Activated CD8-positive, alpha-beta T cell treated with anti-CD3 and anti-CD28 coated beads for 36 hours (primary cell): ENCODE measurements at regions of chr12 and their contacts with region 1.

Region 1: GRCh38 chr12:21677622-21678277 is 20.1 kb upstream of the LDHB start:
- DNase-seq: peak; percentile 25
- ATAC-seq: peak; percentile 31
- H3K4me3 Mint-ChIP-seq: peak overlapping the region; percentile 21
- H3K27ac Mint-ChIP-seq: peak overlapping the region; percentile 84
- H3K4me1 Mint-ChIP-seq: peaks cover 44% of the 10 kb centered on the region
- H3K27me3 Mint-ChIP-seq: no peaks in the 10 kb centered on the region
- CTCF ChIP-seq: no peak

Region 2: GRCh38 chr12:21248679-21249078 is 429.1 kb before region 1 on chr12:
- CTCF ChIA-PET with region 1: interaction called, 4 read pairs
- POLR2A ChIA-PET with region 1: no interaction called
- intact Hi-C with region 1: loop called (anchors 5 kb)
- DNase-seq: no peak
- ATAC-seq: no peak
- H3K4me3 Mint-ChIP-seq: no peak overlapping the region
- H3K27ac Mint-ChIP-seq: no peak overlapping the region
- H3K4me1 Mint-ChIP-seq: no peaks in the 10 kb centered on the region
- H3K27me3 Mint-ChIP-seq: no peaks in the 10 kb centered on the region
- CTCF ChIP-seq: peak; percentile 35

Region 3: GRCh38 chr12:21607701-21608100 is 70.0 kb before region 1 on chr12:
- CTCF ChIA-PET with region 1: interaction called, 12 read pairs
- POLR2A ChIA-PET with region 1: no interaction called
- intact Hi-C with region 1: loop called (anchors 2 kb)
- DNase-seq: no peak
- ATAC-seq: no peak
- H3K4me3 Mint-ChIP-seq: no peak overlapping the region
- H3K27ac Mint-ChIP-seq: no peak overlapping the region
- H3K4me1 Mint-ChIP-seq: no peaks in the 10 kb centered on the region
- H3K27me3 Mint-ChIP-seq: no peaks in the 10 kb centered on the region
- CTCF ChIP-seq: peak; percentile 29

Region 4: GRCh38 chr12:21650833-21651396 is 26.8 kb before region 1 on chr12:
- CTCF ChIA-PET with region 1: interaction called, 16 read pairs
- POLR2A ChIA-PET with region 1: interaction called, 31 read pairs
- intact Hi-C with region 1: loop called (anchors 2 kb)
- DNase-seq: no peak
- ATAC-seq: no peak
- H3K4me3 Mint-ChIP-seq: peak overlapping the region; percentile 14
- H3K27ac Mint-ChIP-seq: peak overlapping the region; percentile 27
- H3K4me1 Mint-ChIP-seq: peaks cover 85% of the 10 kb centered on the region
- H3K27me3 Mint-ChIP-seq: no peaks in the 10 kb centered on the region
- CTCF ChIP-seq: no peak

Region 5: GRCh38 chr12:21690704-21691368 is 13.1 kb after region 1 on chr12:
- CTCF ChIA-PET with region 1: interaction called, 20 read pairs
- POLR2A ChIA-PET with region 1: no interaction called
- intact Hi-C with region 1: no loop called
- DNase-seq: no peak
- ATAC-seq: no peak
- H3K4me3 Mint-ChIP-seq: no peak overlapping the region
- H3K27ac Mint-ChIP-seq: peak overlapping the region; percentile 55
- H3K4me1 Mint-ChIP-seq: peaks cover 19% of the 10 kb centered on the region
- H3K27me3 Mint-ChIP-seq: no peaks in the 10 kb centered on the region
- CTCF ChIP-seq: no peak